Prostate gland (tissue), 2 donors: ENCODE measurements at regions of chr9 and their contacts with region 1.

Region 1: GRCh38 chr9:35116898-35117551 is 1.4 kb upstream of the ATOSB start:
- DNase-seq: peak; percentile 95
- H3K4me3 ChIP-seq: peak overlapping the region; percentile 45 to 49
- H3K27ac ChIP-seq: peak overlapping the region; percentile 87 to 89
- H3K4me1 ChIP-seq: peaks cover 15% of the 10 kb centered on the region
- H3K27me3 ChIP-seq: no peaks in the 10 kb centered on the region
- CTCF ChIP-seq: peak; percentile 87 to 98 (median 94)
- POLR2A ChIP-seq: no peak

Region 2: DNA sequence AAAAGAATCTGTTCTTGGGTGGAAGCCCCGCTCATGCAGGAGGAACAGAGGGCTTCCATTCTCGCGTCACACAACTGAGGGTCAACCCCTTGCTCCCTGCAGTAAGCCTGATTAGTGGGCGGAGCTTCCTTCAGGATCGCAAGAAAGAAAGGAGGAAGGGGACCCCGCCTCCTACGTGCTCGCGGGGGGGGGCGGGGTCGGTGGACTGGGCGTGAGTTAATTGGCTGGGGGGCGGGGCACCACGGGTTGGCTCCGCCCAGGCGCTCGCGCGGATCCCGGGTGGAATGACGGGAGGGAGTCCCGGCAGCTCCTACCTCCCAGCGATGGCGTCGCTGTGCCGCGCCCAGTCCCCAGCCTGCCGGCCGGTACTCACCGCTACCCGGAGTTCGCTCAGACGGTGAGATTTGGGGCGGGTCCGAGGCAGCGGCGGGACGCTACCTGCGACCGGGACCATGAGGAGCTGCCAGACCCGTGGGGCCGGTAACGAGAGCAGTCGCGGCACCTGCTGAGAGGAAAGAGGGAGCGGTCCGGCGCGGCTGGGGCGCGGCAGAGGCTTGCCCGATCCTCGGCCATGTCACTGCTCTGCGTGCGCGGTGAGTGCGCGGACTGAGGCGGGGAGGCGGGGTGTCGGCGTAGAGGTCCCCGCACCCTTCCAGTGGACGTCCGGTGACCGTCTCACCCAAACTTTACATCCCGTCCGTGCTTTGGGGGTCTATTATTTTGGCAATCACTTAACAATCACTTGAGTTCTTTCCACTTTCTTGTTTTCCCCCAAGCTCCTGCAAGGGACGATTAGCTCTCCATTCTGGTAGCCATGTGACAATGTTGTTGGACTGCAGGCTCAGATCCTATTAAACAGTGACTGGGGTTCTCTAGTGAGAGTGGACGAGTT is 44.9 kb after region 1 on chr9 and contains the start of gene UNC13B:
- intact Hi-C with region 1: loop called (anchors 10 kb)
- DNase-seq: peak; percentile 97
- H3K4me3 ChIP-seq: peak within 1 kb of the TSS; percentile 79 to 83
- H3K27ac ChIP-seq: peak within 1 kb of the TSS; percentile 94
- H3K4me1 ChIP-seq: no peaks in the 10 kb centered on the region
- H3K27me3 ChIP-seq: no peaks in the 10 kb centered on the region
- CTCF ChIP-seq: peak in 2 of 4 experiments; percentile 25 to 28
- POLR2A ChIP-seq: peak; percentile 87
- total RNA-seq, gene UNC13B: 63.8 to 140 TPM

Region 3: GRCh38 chr9:35258676-35259474 is 141.8 kb after region 1 on chr9:
- intact Hi-C with region 1: loop called (anchors 2 kb)
- DNase-seq: peak; percentile 86
- H3K4me3 ChIP-seq: no peak overlapping the region
- H3K27ac ChIP-seq: peak overlapping the region; percentile 81 to 88
- H3K4me1 ChIP-seq: peaks cover 5% of the 10 kb centered on the region
- H3K27me3 ChIP-seq: no peaks in the 10 kb centered on the region
- CTCF ChIP-seq: peak; percentile 49 to 94 (median 72)
- POLR2A ChIP-seq: no peak

Region 4: GRCh38 chr9:35464141-35465025 is 347.4 kb after region 1 on chr9:
- intact Hi-C with region 1: no loop called
- DNase-seq: no peak
- H3K4me3 ChIP-seq: no peak overlapping the region
- H3K27ac ChIP-seq: no peak overlapping the region
- H3K4me1 ChIP-seq: no peaks in the 10 kb centered on the region
- H3K27me3 ChIP-seq: no peaks in the 10 kb centered on the region
- CTCF ChIP-seq: no peak
- POLR2A ChIP-seq: no peak

Region 5: GRCh38 chr9:35476596-35476995 is 359.6 kb after region 1 on chr9:
- intact Hi-C with region 1: loop called (anchors 2 kb)
- DNase-seq: no peak
- H3K4me3 ChIP-seq: no peak overlapping the region
- H3K27ac ChIP-seq: no peak overlapping the region
- H3K4me1 ChIP-seq: no peaks in the 10 kb centered on the region
- H3K27me3 ChIP-seq: no peaks in the 10 kb centered on the region
- CTCF ChIP-seq: no peak
- POLR2A ChIP-seq: no peak

Region 6: DNA sequence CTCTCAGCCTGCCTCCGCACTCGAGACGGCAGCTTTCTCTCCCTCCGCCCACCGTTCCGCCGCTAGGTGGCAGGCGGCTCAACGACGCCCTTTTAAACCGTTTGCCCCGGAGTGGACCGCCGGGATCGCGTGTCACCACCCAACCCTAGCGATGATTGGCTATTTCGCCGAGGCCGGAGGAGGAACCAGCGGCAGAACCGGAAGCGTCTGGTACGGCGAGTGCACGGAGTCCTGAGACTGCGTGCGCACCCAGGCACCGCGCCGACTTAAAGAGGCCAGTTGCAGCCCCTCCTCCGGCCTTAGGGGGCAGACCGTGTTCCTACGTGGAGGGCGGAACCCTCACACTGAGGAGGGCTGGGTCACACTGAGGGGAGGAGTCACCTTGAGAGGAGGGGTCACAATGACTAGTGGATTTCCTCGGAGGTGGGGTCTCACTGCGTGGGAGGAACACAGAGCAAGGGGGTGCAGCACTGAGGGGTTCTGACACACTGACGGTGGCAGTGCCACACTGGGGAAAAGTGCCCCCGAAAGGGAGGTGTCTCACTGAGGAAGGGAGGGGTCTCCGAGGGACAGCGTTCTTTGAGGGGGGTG is 487.1 kb after region 1 on chr9:
- intact Hi-C with region 1: loop called (anchors 10 kb)
- DNase-seq: peak; percentile 100
- H3K4me3 ChIP-seq: peak overlapping the region; percentile 79 to 82
- H3K27ac ChIP-seq: peak overlapping the region; percentile 94
- H3K4me1 ChIP-seq: peaks cover 13% of the 10 kb centered on the region
- H3K27me3 ChIP-seq: no peaks in the 10 kb centered on the region
- CTCF ChIP-seq: peak; percentile 90 to 99 (median 99)
- POLR2A ChIP-seq: peak; percentile 90

Region 7: GRCh38 chr9:35732122-35732799 is 615.2 kb after region 1 on chr9 and contains the starts of genes CREB3 and TLN1:
- intact Hi-C with region 1: loop called (anchors 10 kb)
- DNase-seq: peak; percentile 98
- H3K4me3 ChIP-seq: peak within 1 kb of the TSS; percentile 65 to 91
- H3K27ac ChIP-seq: peak within 1 kb of the TSS; percentile 88 to 96
- H3K4me1 ChIP-seq: peaks cover 27% of the 10 kb centered on the region
- H3K27me3 ChIP-seq: no peaks in the 10 kb centered on the region
- CTCF ChIP-seq: peak in 1 of 4 experiments; percentile 26
- POLR2A ChIP-seq: peak; percentile 78
- total RNA-seq, gene CREB3: 60.9 to 120 TPM
- total RNA-seq, gene TLN1: 167 to 315 TPM